ENCODE measurements at regions of chr16 and their contacts with region 1.

Region 1: GRCh38 chr16:53773150-53773846 is 69.3 kb downstream of the FTO start:
- DNase-seq: no peak
- ATAC-seq: no peak
- H3K4me3 Mint-ChIP-seq: no peak overlapping the region
- H3K27ac Mint-ChIP-seq: no peak overlapping the region
- H3K4me1 Mint-ChIP-seq: peaks cover 24% of the 10 kb centered on the region
- H3K27me3 Mint-ChIP-seq: no peaks in the 10 kb centered on the region
- CTCF ChIP-seq: no peak

Region 2: GRCh38 chr16:53632526-53632925 is 140.8 kb before region 1 on chr16:
- CTCF ChIA-PET with region 1: no interaction called
- POLR2A ChIA-PET with region 1: no interaction called
- intact Hi-C with region 1: no loop called
- DNase-seq: no peak
- ATAC-seq: no peak
- H3K4me3 Mint-ChIP-seq: no peak overlapping the region
- H3K27ac Mint-ChIP-seq: no peak overlapping the region
- H3K4me1 Mint-ChIP-seq: peaks cover 8% of the 10 kb centered on the region
- H3K27me3 Mint-ChIP-seq: no peaks in the 10 kb centered on the region
- CTCF ChIP-seq: no peak

Region 3: DNA sequence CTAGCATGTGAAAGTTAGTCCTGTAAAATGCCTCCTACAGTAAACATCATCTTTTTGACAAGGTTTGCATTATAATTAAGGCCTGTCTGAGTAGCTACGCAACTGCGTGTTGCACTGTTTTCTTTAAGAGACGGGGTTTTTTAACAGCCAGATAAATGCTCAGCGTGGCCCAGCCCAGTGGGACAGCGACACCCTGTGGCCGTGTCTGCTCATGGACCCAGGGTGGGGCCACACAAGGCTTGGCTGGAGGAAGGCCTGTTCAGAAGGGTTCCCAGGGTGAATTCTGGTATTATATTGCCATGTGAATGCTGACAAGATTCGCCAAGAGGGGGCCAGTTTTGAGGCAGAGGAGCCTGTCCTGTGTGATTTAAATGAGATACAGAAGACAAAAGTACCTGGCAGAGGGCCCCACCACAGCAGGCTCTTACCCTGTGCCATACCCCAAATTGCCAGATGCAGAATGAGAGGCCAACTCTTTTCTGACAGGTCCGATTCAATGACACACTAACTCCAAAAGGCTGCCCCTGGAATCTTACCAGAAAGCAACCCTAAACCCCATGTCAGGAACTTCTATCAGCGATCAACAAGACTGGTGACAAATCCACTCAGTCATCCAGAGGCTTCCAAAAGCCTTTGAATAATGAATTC is 1484.8 kb after region 1 on chr16:
- CTCF ChIA-PET with region 1: interaction called, 4 read pairs
- POLR2A ChIA-PET with region 1: no interaction called
- intact Hi-C with region 1: loop called (anchors 5 kb)
- DNase-seq: no peak
- ATAC-seq: no peak
- H3K4me3 Mint-ChIP-seq: no peak overlapping the region
- H3K27ac Mint-ChIP-seq: no peak overlapping the region
- H3K4me1 Mint-ChIP-seq: peaks cover 2% of the 10 kb centered on the region
- H3K27me3 Mint-ChIP-seq: no peaks in the 10 kb centered on the region
- CTCF ChIP-seq: no peak

Region 4: GRCh38 chr16:55370762-55371482 is 1597.6 kb after region 1 on chr16:
- CTCF ChIA-PET with region 1: no interaction called
- POLR2A ChIA-PET with region 1: no interaction called
- intact Hi-C with region 1: loop called (anchors 10 kb)
- DNase-seq: no peak
- ATAC-seq: no peak
- H3K4me3 Mint-ChIP-seq: no peak overlapping the region
- H3K27ac Mint-ChIP-seq: no peak overlapping the region
- H3K4me1 Mint-ChIP-seq: peaks cover 9% of the 10 kb centered on the region
- H3K27me3 Mint-ChIP-seq: peaks cover 25% of the 10 kb centered on the region
- CTCF ChIP-seq: no peak

Region 5: GRCh38 chr16:55701442-55702319 is 1928.4 kb after region 1 on chr16:
- CTCF ChIA-PET with region 1: no interaction called
- POLR2A ChIA-PET with region 1: no interaction called
- intact Hi-C with region 1: loop called (anchors 5 kb)
- DNase-seq: no peak
- ATAC-seq: no peak
- H3K4me3 Mint-ChIP-seq: no peak overlapping the region
- H3K27ac Mint-ChIP-seq: no peak overlapping the region
- H3K4me1 Mint-ChIP-seq: no peaks in the 10 kb centered on the region
- H3K27me3 Mint-ChIP-seq: peaks cover 5% of the 10 kb centered on the region
- CTCF ChIP-seq: no peak